Lower lobe of right lung (tissue), 2 donors: ENCODE measurements at regions of chr11 and their contacts with region 1.

Region 1: DNA sequence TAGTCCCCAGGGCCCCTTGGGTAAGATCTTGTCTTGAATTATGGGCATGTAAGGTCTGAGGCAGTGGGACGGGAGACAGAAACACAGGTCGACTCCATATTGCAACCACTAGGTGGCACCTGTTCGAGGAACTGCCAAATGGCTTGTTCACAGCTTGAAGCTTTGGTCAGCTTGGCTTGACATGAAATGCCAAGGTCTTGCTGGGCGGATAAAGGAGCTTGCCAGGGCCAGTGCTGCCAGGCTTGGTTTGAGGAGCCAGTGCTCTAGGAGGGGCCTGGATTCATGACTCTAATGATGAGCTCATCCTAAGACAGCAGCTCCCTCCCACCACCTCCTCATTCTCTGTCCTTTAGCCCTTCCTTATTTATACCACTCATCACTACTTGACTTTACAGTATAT is 11.9 kb upstream of the NRIP3 start:
- DNase-seq: peak; percentile 56
- ATAC-seq: peak; percentile 86 to 87
- H3K4me3 ChIP-seq: no peak overlapping the region
- H3K27ac ChIP-seq: no peak overlapping the region
- H3K4me1 ChIP-seq: peaks cover 20% of the 10 kb centered on the region
- H3K27me3 ChIP-seq: no peaks in the 10 kb centered on the region
- CTCF ChIP-seq: peak; percentile 79

Region 2: GRCh38 chr11:9137293-9138132 is 121.8 kb after region 1 on chr11:
- intact Hi-C with region 1: loop called (anchors 10 kb)
- DNase-seq: peak; percentile 81
- ATAC-seq: peak; percentile 96 to 97
- H3K4me3 ChIP-seq: no peak overlapping the region
- H3K27ac ChIP-seq: peak overlapping the region; percentile 42
- H3K4me1 ChIP-seq: peaks cover 24% of the 10 kb centered on the region
- H3K27me3 ChIP-seq: no peaks in the 10 kb centered on the region
- CTCF ChIP-seq: peak; percentile 97